ENCODE measurements at regions of chr5 and their contacts with region 1.

Region 1: DNA sequence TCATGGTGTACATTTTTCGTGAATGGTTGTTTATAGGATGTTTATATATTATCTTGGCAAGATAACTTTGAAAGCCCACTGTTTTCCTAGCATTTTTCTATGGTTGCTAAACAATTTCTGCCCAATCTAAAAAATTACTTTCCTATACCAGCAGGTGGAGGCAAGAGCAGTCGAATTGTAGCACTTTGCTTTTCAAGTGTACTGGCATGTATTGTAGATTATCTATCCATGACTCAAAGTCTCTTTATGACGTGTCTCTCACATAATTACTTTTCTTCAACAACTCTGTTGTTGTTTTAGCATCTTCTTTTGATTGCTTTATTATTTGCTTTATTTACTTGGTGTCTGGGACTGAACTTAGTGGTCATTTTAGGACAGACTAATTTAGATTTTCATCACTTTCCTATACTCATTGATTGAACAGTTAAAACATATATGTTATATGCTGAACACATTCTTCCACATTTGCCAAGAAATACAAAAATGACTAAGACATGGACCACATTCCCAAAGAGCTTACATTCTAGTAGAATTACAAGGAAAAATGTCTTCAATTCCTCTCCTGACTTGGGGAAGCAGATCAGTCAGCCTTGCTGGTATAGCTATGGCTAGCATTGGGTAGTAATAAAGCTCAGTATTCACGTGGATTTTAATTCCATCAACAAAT is 20.7 kb downstream of the NLN start:
- DNase-seq: peak; percentile 50 to 60
- ATAC-seq: peak; percentile 82 to 83
- H3K4me3 ChIP-seq: no peak overlapping the region
- H3K27ac ChIP-seq: no peak overlapping the region
- H3K4me1 ChIP-seq: peaks cover 19% of the 10 kb centered on the region
- CTCF ChIP-seq: peak; percentile 77
- EP300 ChIP-seq: no peak
- POLR2A ChIP-seq: no peak
- RAD21 ChIP-seq: peak; percentile 76 to 82

Region 2: DNA sequence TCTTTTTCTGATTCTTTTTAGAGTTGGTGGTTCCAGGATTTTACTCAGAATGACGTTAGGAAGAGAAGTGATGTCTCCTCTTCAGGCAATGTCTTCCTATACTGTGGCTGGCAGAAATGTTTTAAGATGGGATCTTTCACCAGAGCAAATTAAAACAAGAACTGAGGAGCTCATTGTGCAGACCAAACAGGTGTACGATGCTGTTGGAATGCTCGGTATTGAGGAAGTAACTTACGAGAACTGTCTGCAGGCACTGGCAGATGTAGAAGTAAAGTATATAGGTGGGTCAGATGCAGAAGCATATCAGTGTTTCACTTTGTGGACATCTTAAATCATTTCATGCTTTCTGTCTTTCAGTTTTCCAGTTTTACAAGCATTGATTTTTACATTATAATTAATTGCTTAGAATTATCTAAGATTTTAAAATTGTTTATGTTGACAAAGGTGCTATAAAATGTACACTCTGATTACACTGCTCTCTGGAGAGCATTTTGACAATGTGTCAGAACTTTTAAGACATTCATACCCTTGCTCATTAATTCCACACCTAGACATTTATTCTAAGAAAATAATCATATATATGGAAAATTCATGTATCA is 15.9 kb after region 1 on chr5:
- CTCF ChIA-PET with region 1: interaction called, 14 read pairs
- POLR2A ChIA-PET with region 1: no interaction called
- DNase-seq: no peak
- ATAC-seq: no peak
- H3K4me3 ChIP-seq: no peak overlapping the region
- H3K27ac ChIP-seq: no peak overlapping the region
- H3K4me1 ChIP-seq: peaks cover 4% of the 10 kb centered on the region; the same call in 1 of the 3 replicates
- CTCF ChIP-seq: no peak
- EP300 ChIP-seq: no peak
- POLR2A ChIP-seq: no peak
- RAD21 ChIP-seq: no peak